ENCODE measurements at regions of chr7 and their contacts with region 1.

Region 1: DNA sequence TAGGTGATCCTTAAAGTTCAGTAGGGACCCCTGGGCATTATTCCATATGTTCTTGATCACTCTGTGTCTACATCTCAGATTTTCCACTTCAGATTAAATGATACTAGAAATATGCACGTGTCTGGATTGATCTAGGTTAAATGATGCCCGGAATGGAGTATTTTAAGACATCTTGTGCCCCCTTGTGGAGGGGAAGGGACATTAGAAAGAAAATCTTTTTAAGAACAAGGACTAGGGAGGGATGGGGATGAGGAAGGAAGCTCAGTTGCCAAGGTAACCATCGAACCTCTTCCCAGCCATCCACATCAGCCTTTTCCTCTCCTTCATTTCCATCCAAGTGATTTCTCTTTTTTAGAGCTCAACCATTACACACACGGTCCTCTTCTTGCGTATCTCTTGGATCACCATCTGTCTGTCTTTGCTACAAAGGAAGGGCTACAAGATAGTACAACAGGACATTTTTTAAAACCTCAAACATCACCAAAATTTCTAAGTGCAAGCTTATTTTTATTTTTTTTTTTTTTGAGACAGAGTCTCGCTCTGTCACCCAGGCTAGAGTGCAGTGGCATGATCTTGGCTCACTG is 40.5 kb downstream of the PRSS2 start:
- DNase-seq: peak; percentile 64 to 82 (median 79)
- H3K4me3 ChIP-seq: no peak overlapping the region
- H3K4me3 Mint-ChIP-seq: peak overlapping the region in 7 of 8 donors; percentile 57 to 79 (median 71)
- H3K27ac ChIP-seq: peak overlapping the region; percentile 99
- H3K27ac Mint-ChIP-seq: peak overlapping the region; percentile 92 to 100 (median 100)
- H3K4me1 ChIP-seq: peaks cover 79% of the 10 kb centered on the region
- H3K4me1 Mint-ChIP-seq: peaks cover 48 to 76% (median 73%) of the 10 kb centered on the region in 4 donors
- H3K27me3 ChIP-seq: no peaks in the 10 kb centered on the region
- H3K27me3 Mint-ChIP-seq: no peaks in the 10 kb centered on the region

Region 2: GRCh38 chr7:142053988-142054387 is 757.3 kb before region 1 on chr7:
- CTCF ChIA-PET with region 1: no interaction called
- POLR2A ChIA-PET with region 1: no interaction called
- intact Hi-C with region 1: no loop called
- DNase-seq: no peak
- H3K4me3 ChIP-seq: no peak overlapping the region
- H3K4me3 Mint-ChIP-seq: no peak overlapping the region
- H3K27ac ChIP-seq: no peak overlapping the region
- H3K27ac Mint-ChIP-seq: no peak overlapping the region
- H3K4me1 ChIP-seq: no peaks in the 10 kb centered on the region
- H3K4me1 Mint-ChIP-seq: no peaks in the 10 kb centered on the region
- H3K27me3 ChIP-seq: no peaks in the 10 kb centered on the region
- H3K27me3 Mint-ChIP-seq: peaks cover 6% of the 10 kb centered on the region in 2 donors

Region 3: DNA sequence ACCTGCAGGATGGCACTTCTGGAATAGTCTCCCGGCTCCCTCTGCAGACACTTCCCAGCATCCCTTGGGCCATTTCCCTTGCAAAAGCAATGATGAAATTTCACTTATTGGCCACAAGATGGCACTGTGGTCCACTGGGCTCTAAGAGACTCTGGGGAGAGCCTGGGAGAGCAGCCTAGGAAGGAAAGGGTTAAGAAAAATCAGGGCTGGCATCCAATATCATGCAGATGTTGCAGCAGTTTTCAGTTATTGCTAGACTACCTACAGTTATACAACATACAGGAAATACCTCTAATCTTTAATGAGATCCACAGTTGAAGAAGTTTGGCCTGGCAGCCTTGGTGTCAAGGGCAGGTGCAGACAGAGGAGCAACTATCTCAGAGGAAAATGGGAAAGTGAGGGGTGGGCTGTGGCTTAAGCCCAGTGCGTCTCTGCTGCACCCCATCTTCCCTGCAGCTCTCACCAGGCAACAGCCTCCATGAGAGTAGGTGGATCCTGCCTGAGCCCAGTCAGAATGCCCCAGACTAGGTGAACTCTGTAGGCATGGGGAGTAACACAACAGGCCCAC is 453.2 kb before region 1 on chr7:
- CTCF ChIA-PET with region 1: interaction called, 6 read pairs
- POLR2A ChIA-PET with region 1: interaction called, 53 read pairs
- intact Hi-C with region 1: no loop called
- DNase-seq: peak in 4 of 5 donors; percentile 35 to 59 (median 42)
- H3K4me3 ChIP-seq: no peak overlapping the region
- H3K4me3 Mint-ChIP-seq: peak overlapping the region in 3 of 8 donors; percentile 3 to 29 (median 14)
- H3K27ac ChIP-seq: no peak overlapping the region
- H3K27ac Mint-ChIP-seq: peak overlapping the region in 5 of 7 donors; percentile 17 to 67 (median 42)
- H3K4me1 ChIP-seq: peaks cover 42% of the 10 kb centered on the region
- H3K4me1 Mint-ChIP-seq: peaks cover 19 to 54% (median 42%) of the 10 kb centered on the region in 4 donors
- H3K27me3 ChIP-seq: no peaks in the 10 kb centered on the region
- H3K27me3 Mint-ChIP-seq: peaks cover 0 to 5% of the 10 kb centered on the region in 2 donors

Region 4: GRCh38 chr7:142478479-142479072 is 332.7 kb before region 1 on chr7:
- CTCF ChIA-PET with region 1: interaction called, 4 read pairs
- POLR2A ChIA-PET with region 1: interaction called, 14 read pairs
- intact Hi-C with region 1: no loop called
- DNase-seq: peak in 3 of 5 donors; percentile 23 to 31 (median 26)
- H3K4me3 ChIP-seq: no peak overlapping the region
- H3K4me3 Mint-ChIP-seq: peak overlapping the region in 7 of 8 donors; percentile 8 to 82 (median 68)
- H3K27ac ChIP-seq: no peak overlapping the region
- H3K27ac Mint-ChIP-seq: peak overlapping the region; percentile 48 to 90 (median 76)
- H3K4me1 ChIP-seq: peaks cover 82% of the 10 kb centered on the region
- H3K4me1 Mint-ChIP-seq: peaks cover 63 to 86% (median 80%) of the 10 kb centered on the region in 4 donors
- H3K27me3 ChIP-seq: no peaks in the 10 kb centered on the region
- H3K27me3 Mint-ChIP-seq: no peaks in the 10 kb centered on the region

Region 5: GRCh38 chr7:142587578-142588191 is 223.6 kb before region 1 on chr7:
- CTCF ChIA-PET with region 1: interaction called, 6 read pairs
- POLR2A ChIA-PET with region 1: interaction called, 13 read pairs
- intact Hi-C with region 1: no loop called
- DNase-seq: peak in 4 of 5 donors; percentile 25 to 35 (median 31)
- H3K4me3 ChIP-seq: no peak overlapping the region
- H3K4me3 Mint-ChIP-seq: peak overlapping the region in 4 of 8 donors; percentile 31 to 61 (median 44)
- H3K27ac ChIP-seq: no peak overlapping the region
- H3K27ac Mint-ChIP-seq: peak overlapping the region in 2 of 7 donors; percentile 12 to 21
- H3K4me1 ChIP-seq: no peaks in the 10 kb centered on the region
- H3K4me1 Mint-ChIP-seq: peaks cover 3 to 7% (median 4%) of the 10 kb centered on the region in 4 donors
- H3K27me3 ChIP-seq: no peaks in the 10 kb centered on the region
- H3K27me3 Mint-ChIP-seq: no peaks in the 10 kb centered on the region

Region 6: DNA sequence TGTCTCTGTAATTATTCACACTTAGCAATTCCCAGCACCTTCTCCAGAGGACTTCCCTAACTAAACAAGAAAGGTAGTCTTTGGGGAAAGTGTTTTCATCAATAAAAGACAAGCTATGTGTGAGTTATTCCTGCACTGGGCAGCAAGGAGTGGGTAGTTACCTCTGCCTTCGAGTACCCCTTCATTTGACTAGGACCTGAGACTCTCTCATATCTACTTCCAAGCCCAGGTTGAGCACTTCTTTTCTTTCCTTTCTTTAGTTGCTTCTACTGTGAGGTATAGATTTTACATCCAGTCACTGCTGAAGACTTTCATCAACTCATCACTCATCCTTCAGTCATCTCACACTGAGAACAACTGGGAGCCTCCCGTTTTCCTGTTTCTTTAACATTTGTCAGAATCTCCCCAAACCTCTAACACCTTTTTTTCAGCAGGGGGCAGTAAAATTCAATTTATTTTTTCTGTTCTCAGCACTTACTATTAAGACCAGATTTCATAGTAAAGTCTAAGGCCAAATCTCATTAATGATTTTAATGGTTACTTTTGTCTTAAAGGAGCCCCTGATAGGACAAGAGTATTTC is 142.1 kb before region 1 on chr7:
- CTCF ChIA-PET with region 1: interaction called, 35 read pairs
- POLR2A ChIA-PET with region 1: interaction called, 7 read pairs
- intact Hi-C with region 1: loop called (anchors 1 kb)
- DNase-seq: peak in 4 of 5 donors; percentile 19 to 43 (median 30)
- H3K4me3 ChIP-seq: no peak overlapping the region
- H3K4me3 Mint-ChIP-seq: peak overlapping the region in 4 of 8 donors; percentile 0 to 67 (median 26)
- H3K27ac ChIP-seq: no peak overlapping the region
- H3K27ac Mint-ChIP-seq: peak overlapping the region in 5 of 7 donors; percentile 39 to 86 (median 70)
- H3K4me1 ChIP-seq: peaks cover 25% of the 10 kb centered on the region
- H3K4me1 Mint-ChIP-seq: peaks cover 19 to 30% (median 25%) of the 10 kb centered on the region in 4 donors
- H3K27me3 ChIP-seq: no peaks in the 10 kb centered on the region
- H3K27me3 Mint-ChIP-seq: no peaks in the 10 kb centered on the region

Region 7: GRCh38 chr7:142853739-142854371 is 42.6 kb after region 1 on chr7:
- CTCF ChIA-PET with region 1: interaction called, 19 read pairs
- POLR2A ChIA-PET with region 1: interaction called, 74 read pairs
- intact Hi-C with region 1: loop called (anchors 1 kb)
- DNase-seq: peak; percentile 63 to 72 (median 71)
- H3K4me3 ChIP-seq: peak overlapping the region; percentile 81 to 90
- H3K4me3 Mint-ChIP-seq: peak overlapping the region; percentile 93 to 98 (median 97)
- H3K27ac ChIP-seq: peak overlapping the region; percentile 27
- H3K27ac Mint-ChIP-seq: peak overlapping the region; percentile 86 to 96 (median 92)
- H3K4me1 ChIP-seq: peaks cover 24% of the 10 kb centered on the region
- H3K4me1 Mint-ChIP-seq: peaks cover 12 to 34% (median 19%) of the 10 kb centered on the region in 4 donors
- H3K27me3 ChIP-seq: no peaks in the 10 kb centered on the region
- H3K27me3 Mint-ChIP-seq: peaks cover 3% of the 10 kb centered on the region in 2 donors

Measured in CD4-positive, alpha-beta memory T cell (primary cell).